GM12878 (cell line): ENCODE measurements at regions of chr3 and their contacts with region 1.

Region 1: DNA sequence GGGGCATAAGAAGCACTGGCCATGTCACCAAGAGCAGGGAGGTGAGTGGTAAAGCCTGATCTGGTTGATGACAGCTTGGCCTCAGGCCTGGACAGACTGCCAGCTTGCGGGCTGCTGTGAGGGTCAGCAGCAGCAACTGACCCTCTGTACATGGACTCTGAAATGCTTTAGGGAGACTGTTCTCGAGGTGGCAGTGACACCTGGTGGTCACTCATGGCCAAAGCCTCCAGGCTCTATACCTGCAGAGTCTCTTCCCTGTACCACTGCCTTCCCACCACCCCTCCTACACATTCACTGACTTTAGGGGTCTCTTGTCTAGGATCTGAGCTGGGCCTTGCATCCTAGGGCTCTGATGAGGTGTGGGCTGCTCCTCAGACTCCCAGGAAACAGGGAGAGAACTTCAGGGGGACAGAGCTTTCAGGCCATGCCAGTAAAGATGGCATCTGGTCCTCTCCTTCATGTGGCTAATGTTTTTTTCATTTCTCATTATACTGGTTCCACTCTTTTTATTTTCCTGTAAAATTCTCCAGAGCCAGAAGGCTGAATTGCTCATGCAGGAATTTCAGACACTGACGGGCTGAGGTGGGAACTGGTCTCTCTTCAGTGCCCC is 17.2 kb upstream of the TIMP4 start:
- DNase-seq: no peak
- ATAC-seq: peak; percentile 100
- H3K4me3 ChIP-seq: no peak overlapping the region
- H3K27ac ChIP-seq: no peak overlapping the region
- H3K4me1 ChIP-seq: no peaks in the 10 kb centered on the region; the same call in 1 of the 2 replicates
- H3K27me3 ChIP-seq: no peaks in the 10 kb centered on the region
- CTCF ChIP-seq: peak; percentile 72 to 83 (median 82)
- EP300 ChIP-seq: no peak
- POLR2A ChIP-seq: no peak
- RAD21 ChIP-seq: peak; percentile 72

Region 2: GRCh38 chr3:12143949-12144504 is 31.9 kb before region 1 on chr3:
- CTCF ChIA-PET with region 1: interaction called, 243 read pairs
- POLR2A ChIA-PET with region 1: no interaction called
- RAD21 ChIA-PET with region 1: interaction called, 93 read pairs
- SMC1A ChIA-PET with region 1: interaction called, 96 read pairs
- in situ Hi-C with region 1: loop called (anchors 5 kb)
- intact Hi-C with region 1: no loop called
- DNase-seq: no peak
- ATAC-seq: no peak
- H3K4me3 ChIP-seq: no peak overlapping the region
- H3K27ac ChIP-seq: no peak overlapping the region
- H3K4me1 ChIP-seq: peaks cover 11% of the 10 kb centered on the region
- H3K27me3 ChIP-seq: no peaks in the 10 kb centered on the region; a peak in 1 of 4 replicates
- CTCF ChIP-seq: no peak
- EP300 ChIP-seq: no peak
- POLR2A ChIP-seq: no peak
- RAD21 ChIP-seq: no peak

Region 3: DNA sequence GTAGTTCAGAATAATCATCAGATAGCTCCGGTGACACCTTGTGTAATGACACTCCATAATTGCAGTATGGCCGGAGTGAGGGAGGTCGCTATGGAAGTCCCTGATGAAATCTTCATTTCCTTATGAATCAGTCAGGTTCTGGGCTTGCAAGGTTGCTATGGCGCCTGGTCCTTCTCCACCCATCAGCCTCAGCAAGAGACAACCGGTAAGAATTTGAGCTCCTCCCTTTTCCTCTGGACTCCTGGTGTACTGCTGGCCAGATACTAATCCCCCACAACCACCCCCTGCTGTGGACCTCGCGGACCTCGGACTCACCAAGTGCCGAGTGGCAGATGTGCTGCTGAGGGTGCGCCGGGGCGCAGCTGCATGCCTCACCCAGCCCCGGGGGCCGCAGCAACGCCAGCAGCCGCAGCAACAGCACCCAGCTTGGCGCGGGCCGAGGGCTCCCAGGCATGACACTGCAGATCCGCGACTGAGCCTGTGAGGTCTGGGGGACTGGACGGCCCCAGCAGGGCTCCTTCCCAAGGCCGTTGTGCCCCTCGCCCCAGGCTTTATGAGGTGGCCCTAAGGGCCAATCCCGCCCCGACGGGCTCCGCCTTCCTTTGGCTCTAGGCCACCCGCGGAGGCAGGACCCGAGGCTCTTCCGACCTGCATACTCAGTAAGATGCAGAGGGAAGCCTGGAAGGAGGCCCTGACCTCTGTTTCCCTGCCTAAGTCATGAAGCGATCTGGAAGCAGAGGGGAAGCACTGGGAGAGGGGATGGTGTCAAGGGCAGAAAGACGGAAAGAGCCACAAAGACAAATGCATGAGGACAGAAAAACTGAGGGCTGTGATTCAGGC is 17.3 kb before region 1 on chr3 and contains the start of gene TIMP4:
- CTCF ChIA-PET with region 1: interaction called, 21 read pairs
- POLR2A ChIA-PET with region 1: no interaction called
- RAD21 ChIA-PET with region 1: interaction called, 4 read pairs
- SMC1A ChIA-PET with region 1: interaction called, 3 read pairs
- in situ Hi-C with region 1: no loop called
- intact Hi-C with region 1: no loop called
- DNase-seq: no peak
- ATAC-seq: no peak
- H3K4me3 ChIP-seq: no peak within 1 kb of the TSS
- H3K27ac ChIP-seq: no peak within 1 kb of the TSS
- H3K4me1 ChIP-seq: no peaks in the 10 kb centered on the region
- H3K27me3 ChIP-seq: peaks cover 0 to 1% of the 10 kb centered on the region in 2 experiments; a peak in 2 of 4 replicates
- CTCF ChIP-seq: no peak
- EP300 ChIP-seq: no peak
- POLR2A ChIP-seq: no peak
- RAD21 ChIP-seq: no peak
- polyA plus RNA-seq, gene TIMP4: not detected

Region 4: GRCh38 chr3:12193485-12194165 is 17.7 kb after region 1 on chr3:
- CTCF ChIA-PET with region 1: interaction called, 68 read pairs
- POLR2A ChIA-PET with region 1: interaction called, 4 read pairs
- RAD21 ChIA-PET with region 1: interaction called, 16 read pairs
- SMC1A ChIA-PET with region 1: interaction called, 83 read pairs
- in situ Hi-C with region 1: no loop called
- intact Hi-C with region 1: no loop called
- DNase-seq: peak; percentile 75
- ATAC-seq: peak; percentile 83
- H3K4me3 ChIP-seq: no peak overlapping the region
- H3K27ac ChIP-seq: peak overlapping the region; percentile 79
- H3K4me1 ChIP-seq: peaks cover 48% of the 10 kb centered on the region
- H3K27me3 ChIP-seq: no peaks in the 10 kb centered on the region
- CTCF ChIP-seq: no peak
- EP300 ChIP-seq: peak; percentile 85 to 91
- POLR2A ChIP-seq: no peak
- RAD21 ChIP-seq: no peak